Caco-2 (cell line): ENCODE measurements at regions of chr1 and their contacts with region 1.

Region 1: DNA sequence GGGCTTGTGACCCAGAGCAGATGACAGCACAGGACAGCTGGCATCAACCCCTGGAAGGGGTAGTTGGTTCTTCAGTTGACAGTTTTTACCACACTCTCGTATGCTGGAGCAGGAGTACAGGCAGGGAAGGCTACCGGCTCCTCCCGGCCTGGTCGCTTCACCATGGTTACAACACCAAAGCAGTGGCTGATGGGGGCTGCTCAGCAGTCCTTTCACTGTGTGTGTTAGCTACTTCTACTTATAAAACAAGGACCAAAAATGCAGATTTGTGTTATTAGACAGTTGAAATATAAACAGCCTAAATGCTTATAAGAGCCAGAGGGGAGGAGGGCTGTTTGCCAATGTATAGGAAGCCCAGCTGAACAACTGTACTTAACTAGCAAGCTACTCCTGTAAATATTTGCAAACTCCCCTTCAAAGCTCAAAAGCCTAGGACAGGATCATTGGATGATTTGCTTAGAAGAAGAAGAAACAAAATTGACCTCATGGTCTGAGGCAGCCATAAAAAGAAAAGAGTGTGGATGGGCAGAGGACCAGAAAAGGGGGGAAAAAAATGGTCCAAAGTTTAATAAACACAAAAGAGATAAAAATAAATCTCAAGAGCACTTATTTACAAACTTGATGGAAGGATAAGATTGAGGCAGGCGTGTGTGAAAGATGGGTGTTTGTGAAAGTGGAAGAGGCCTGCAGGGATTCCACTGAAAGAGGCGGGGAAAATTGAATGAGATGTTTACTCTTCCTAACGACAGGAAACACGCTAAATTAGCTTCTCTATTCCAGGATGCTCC is 57.1 kb downstream of the TGFB2 start:
- DNase-seq: peak; percentile 42 to 46
- H3K4me3 ChIP-seq: no peak overlapping the region
- H3K4me3 Mint-ChIP-seq: no peak overlapping the region
- H3K27ac Mint-ChIP-seq: peak overlapping the region; percentile 16
- H3K4me1 ChIP-seq: peaks cover 19% of the 10 kb centered on the region
- H3K4me1 Mint-ChIP-seq: peaks cover 18% of the 10 kb centered on the region
- H3K27me3 ChIP-seq: no peaks in the 10 kb centered on the region
- H3K27me3 Mint-ChIP-seq: no peaks in the 10 kb centered on the region
- CTCF ChIP-seq: no peak

Region 2: GRCh38 chr1:218380151-218380977 is 21.8 kb before region 1 on chr1:
- CTCF ChIA-PET with region 1: no interaction called
- POLR2A ChIA-PET with region 1: no interaction called
- intact Hi-C with region 1: loop called (anchors 1 kb)
- DNase-seq: peak; percentile 79 to 82
- H3K4me3 ChIP-seq: no peak overlapping the region
- H3K4me3 Mint-ChIP-seq: peak overlapping the region; percentile 20
- H3K27ac Mint-ChIP-seq: peak overlapping the region; percentile 89
- H3K4me1 ChIP-seq: peaks cover 49% of the 10 kb centered on the region
- H3K4me1 Mint-ChIP-seq: peaks cover 30% of the 10 kb centered on the region
- H3K27me3 ChIP-seq: no peaks in the 10 kb centered on the region
- H3K27me3 Mint-ChIP-seq: no peaks in the 10 kb centered on the region
- CTCF ChIP-seq: no peak